PC-3 (cell line): ENCODE measurements at regions of chr9 and their contacts with region 1.

Region 1: DNA sequence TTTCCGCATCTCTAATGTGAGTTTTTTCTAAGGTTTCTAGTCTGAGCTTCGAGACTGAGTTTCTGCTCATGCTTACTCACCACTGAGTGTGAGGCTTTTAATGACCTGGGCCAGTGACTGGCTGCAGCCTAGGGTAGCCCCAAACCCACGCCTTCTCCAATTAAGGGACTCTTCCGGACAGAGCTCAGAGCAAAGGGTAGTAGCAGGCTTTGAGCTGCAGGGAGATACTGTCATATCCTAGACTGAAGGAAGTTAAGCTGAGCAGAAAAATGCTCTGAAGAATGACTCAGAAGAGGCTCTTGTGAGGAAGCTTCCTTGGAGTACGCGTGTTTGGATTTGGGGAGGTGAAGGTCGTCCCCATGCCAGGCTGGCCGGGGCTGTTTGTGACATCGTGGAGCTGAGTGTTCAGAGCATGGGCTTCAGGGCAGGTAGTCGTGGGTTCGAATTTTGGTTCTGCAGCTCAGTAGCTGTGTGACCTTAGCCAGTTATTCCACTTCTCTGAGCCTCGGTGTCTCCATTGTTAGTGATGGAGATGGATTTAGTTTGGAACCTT is 3.5 kb downstream of the USP20 start:
- DNase-seq: peak; percentile 91
- ATAC-seq: peak; percentile 81
- H3K4me3 ChIP-seq: peak overlapping the region; percentile 31; the same call in 1 of the 2 replicates
- H3K27ac ChIP-seq: peak overlapping the region; percentile 77
- H3K4me1 ChIP-seq: peaks cover 31% of the 10 kb centered on the region
- H3K27me3 ChIP-seq: no peaks in the 10 kb centered on the region
- CTCF ChIP-seq: no peak

Region 2: GRCh38 chr9:129785866-129786265 is 52.9 kb before region 1 on chr9:
- CTCF ChIA-PET with region 1: no interaction called
- POLR2A ChIA-PET with region 1: no interaction called
- intact Hi-C with region 1: no loop called
- DNase-seq: no peak
- ATAC-seq: no peak
- H3K4me3 ChIP-seq: no peak overlapping the region
- H3K27ac ChIP-seq: no peak overlapping the region
- H3K4me1 ChIP-seq: no peaks in the 10 kb centered on the region
- H3K27me3 ChIP-seq: no peaks in the 10 kb centered on the region
- CTCF ChIP-seq: no peak

Region 3: DNA sequence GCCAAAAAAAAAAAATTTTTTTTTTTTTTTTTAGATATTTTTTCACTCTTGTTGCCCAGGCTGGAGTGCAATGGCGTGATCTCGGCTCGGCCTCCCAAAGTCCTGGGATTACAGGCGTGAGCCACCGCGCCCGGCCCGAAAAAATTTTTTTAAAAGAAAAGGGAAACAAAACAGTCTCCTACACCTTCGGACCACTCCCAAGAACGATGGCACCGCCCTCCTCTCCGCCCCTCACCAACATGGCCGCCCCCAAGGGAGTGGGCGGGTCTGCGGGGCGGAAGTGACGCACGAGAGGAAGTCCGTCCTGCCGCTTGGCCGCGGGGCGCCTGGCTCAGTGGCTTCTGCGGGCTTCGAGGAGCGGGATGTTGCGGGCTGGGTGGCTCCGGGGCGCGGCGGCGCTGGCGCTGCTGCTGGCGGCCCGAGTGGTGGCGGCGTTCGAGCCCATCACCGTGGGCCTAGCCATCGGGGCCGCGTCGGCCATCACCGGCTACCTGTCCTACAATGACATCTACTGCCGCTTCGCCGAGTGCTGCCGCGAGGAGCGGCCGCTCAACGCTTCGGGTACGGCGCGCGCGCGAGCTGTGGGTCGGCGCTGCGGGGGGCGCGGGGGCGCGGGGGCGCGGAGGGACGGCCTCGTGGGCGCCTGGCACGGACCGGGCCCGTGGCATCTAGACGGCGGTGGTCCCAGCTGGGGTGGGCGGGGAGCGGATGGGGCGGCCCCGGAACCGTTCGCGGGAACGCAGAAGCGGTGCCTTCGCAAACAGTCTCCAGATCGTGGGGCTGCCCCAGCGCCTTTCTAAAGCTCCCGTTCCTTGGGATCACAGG is 35.7 kb before region 1 on chr9 and contains the start of gene TOR1B:
- CTCF ChIA-PET with region 1: no interaction called
- POLR2A ChIA-PET with region 1: no interaction called
- intact Hi-C with region 1: no loop called
- DNase-seq: peak; percentile 83
- ATAC-seq: peak; percentile 93
- H3K4me3 ChIP-seq: peak within 1 kb of the TSS; percentile 91
- H3K27ac ChIP-seq: no peak within 1 kb of the TSS
- H3K4me1 ChIP-seq: peaks cover 5% of the 10 kb centered on the region; the same call in 1 of the 2 replicates
- H3K27me3 ChIP-seq: no peaks in the 10 kb centered on the region
- CTCF ChIP-seq: no peak
- total RNA-seq, gene TOR1B: 11.0 and 12.8 TPM in 2 replicates

Region 4: GRCh38 chr9:129884220-129885017 is 45.6 kb after region 1 on chr9:
- CTCF ChIA-PET with region 1: no interaction called
- POLR2A ChIA-PET with region 1: no interaction called
- intact Hi-C with region 1: loop called (anchors 1 kb)
- DNase-seq: peak; percentile 87
- ATAC-seq: peak; percentile 82
- H3K4me3 ChIP-seq: peak overlapping the region; percentile 57
- H3K27ac ChIP-seq: no peak overlapping the region
- H3K4me1 ChIP-seq: peaks cover 24% of the 10 kb centered on the region
- H3K27me3 ChIP-seq: no peaks in the 10 kb centered on the region
- CTCF ChIP-seq: no peak

Region 5: GRCh38 chr9:130002320-130003046 is 163.7 kb after region 1 on chr9:
- CTCF ChIA-PET with region 1: no interaction called
- POLR2A ChIA-PET with region 1: no interaction called
- intact Hi-C with region 1: no loop called
- DNase-seq: no peak
- ATAC-seq: no peak
- H3K4me3 ChIP-seq: no peak overlapping the region
- H3K27ac ChIP-seq: no peak overlapping the region
- H3K4me1 ChIP-seq: no peaks in the 10 kb centered on the region
- H3K27me3 ChIP-seq: no peaks in the 10 kb centered on the region
- CTCF ChIP-seq: no peak